CD8-positive, alpha-beta memory T cell (primary cell): ENCODE measurements at regions of chr3 and their contacts with region 1.

Region 1: GRCh38 chr3:31498791-31499190 is 33.9 kb upstream of the STT3B start:
- DNase-seq: no peak
- H3K4me3 ChIP-seq: no peak overlapping the region
- H3K4me3 Mint-ChIP-seq: no peak overlapping the region
- H3K27ac ChIP-seq: no peak overlapping the region
- H3K27ac Mint-ChIP-seq: no peak overlapping the region
- H3K4me1 ChIP-seq: peaks cover 5% of the 10 kb centered on the region
- H3K4me1 Mint-ChIP-seq: peaks cover 15 to 19% (median 19%) of the 10 kb centered on the region in 3 donors
- H3K27me3 ChIP-seq: no peaks in the 10 kb centered on the region
- H3K27me3 Mint-ChIP-seq: no peaks in the 10 kb centered on the region

Region 2: DNA sequence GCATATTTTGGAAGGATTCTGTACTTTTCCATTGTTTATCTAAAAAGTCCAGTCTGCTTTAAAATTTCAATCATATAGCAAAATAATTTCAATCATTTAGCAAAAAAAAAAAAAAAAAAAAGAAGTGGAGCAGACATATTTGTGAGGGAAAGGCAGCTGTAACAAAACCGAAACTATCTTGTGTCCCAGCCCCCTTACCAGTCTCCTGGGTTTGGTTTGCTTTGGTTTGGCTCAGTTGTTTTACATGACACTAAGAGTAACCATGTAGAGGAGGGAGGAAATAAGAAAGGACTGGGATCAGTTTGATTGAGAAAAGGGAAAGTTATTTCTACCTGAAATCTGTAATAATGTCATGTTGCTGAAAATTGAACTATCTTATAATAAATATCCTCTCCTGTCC is 445.5 kb before region 1 on chr3:
- CTCF ChIA-PET with region 1: no interaction called
- POLR2A ChIA-PET with region 1: interaction called, 10 read pairs
- DNase-seq: no peak
- H3K4me3 ChIP-seq: no peak overlapping the region
- H3K4me3 Mint-ChIP-seq: no peak overlapping the region
- H3K27ac ChIP-seq: no peak overlapping the region
- H3K27ac Mint-ChIP-seq: no peak overlapping the region
- H3K4me1 ChIP-seq: no peaks in the 10 kb centered on the region
- H3K4me1 Mint-ChIP-seq: no peaks in the 10 kb centered on the region
- H3K27me3 ChIP-seq: no peaks in the 10 kb centered on the region
- H3K27me3 Mint-ChIP-seq: peaks cover 2 to 3% of the 10 kb centered on the region in 2 donors